Dendritic cell treated with granulocyte-macrophage colony-stimulating factor and Interleukin-4, amounts not matched to agents 40 ng/mL and 50 ng/mL, for 4 days (primary cell): ENCODE measurements at regions of chr9 and their contacts with region 1.

Region 1: DNA sequence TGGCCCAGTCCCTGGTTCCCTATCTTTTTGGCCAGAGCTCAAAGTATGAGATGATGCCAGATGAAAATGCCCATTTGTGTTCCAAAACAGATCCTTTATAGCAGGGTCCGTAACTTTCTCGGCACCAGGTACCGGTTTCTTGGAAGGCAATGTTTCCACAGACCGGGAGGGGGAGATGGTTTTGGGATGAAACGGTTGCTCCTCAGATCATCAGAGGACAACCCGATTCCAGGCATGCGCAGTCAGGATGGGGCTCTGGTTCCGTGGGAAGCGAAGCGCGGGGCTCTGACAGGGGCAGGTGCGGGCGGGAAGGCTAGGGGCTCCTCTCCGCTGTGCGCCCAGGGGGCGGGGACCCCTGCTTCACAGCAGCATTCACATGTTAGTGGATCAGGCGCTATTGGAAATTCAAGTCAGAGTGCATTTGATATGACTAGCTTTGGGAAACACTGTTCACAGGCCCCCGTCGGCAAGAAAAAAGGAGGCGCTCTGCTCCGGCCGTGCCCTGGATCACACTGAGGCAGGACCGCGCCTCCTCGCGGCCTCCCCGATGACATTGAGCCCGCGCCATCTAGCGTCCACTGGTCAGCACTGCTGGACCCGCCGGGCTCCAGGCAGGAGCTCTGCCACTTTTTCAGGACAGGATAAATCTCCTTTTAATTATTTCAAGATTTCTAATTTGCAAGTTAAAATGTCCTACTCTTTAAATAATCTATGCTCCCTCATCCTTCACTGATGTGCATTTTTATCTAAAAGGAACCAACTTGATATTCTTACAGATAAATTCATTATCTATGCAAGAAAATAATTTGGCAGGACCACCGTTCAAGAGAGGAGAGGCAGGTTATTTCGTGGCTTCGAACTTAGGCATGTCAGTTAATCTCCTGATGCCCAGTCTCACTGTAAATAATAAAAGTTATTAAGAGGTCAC is 190.0 kb downstream of the FANCC start:
- H3K4me3 Mint-ChIP-seq: peak overlapping the region; percentile 33
- H3K27ac Mint-ChIP-seq: no peak overlapping the region
- H3K4me1 Mint-ChIP-seq: peaks cover 10% of the 10 kb centered on the region
- H3K27me3 Mint-ChIP-seq: peaks cover 3% of the 10 kb centered on the region

Region 2: DNA sequence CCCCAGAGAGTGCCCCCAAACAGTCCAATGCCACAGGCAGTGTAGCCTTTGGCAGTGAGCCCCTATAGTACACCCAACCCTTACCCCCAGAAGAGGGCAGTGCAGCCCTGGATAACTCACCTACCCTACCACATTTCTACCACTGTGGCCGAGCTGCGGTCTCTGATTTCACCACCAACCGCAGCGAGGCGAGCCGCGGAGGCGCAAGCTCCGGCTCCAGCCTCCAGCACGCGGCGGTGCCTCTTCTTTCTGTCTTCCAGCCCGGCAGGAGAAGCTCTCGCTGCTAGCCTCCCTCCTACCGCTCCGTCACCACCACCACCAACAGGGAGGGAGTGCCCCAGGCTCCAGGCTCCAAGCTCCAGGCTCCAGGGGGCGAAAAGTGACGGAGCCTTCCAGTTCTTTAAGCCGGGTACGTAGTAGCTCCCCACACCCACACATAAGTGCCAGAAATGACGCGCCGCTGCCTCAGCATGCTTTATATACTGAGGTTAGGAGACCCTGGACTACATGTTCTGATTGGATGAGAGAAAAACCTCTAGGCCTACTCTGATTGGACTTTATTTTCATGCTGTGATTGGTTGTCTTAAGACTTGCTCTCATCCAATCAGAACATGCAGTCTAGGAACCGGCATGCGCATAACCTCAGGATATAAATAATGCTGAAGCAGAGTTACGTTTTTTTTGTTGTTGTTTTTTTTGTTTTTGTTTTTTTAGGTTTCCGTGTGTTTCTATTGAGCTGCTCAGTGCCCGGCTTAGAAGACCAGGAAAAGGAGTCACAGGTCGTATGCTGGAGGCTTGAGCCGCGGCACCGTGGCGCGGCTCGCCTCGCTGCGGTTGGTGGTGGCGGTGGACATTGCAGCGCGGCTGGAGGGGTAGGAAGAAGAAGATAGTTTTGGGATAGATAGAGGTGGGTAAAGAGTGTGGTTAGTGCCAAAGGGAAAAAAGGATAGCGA is 572.8 kb before region 1 on chr9 and contains the start of gene PCAT7:
- intact Hi-C with region 1: loop called (anchors 5 kb)
- H3K4me3 Mint-ChIP-seq: no peak within 1 kb of the TSS
- H3K27ac Mint-ChIP-seq: no peak within 1 kb of the TSS
- H3K4me1 Mint-ChIP-seq: peaks cover 5% of the 10 kb centered on the region
- H3K27me3 Mint-ChIP-seq: peaks cover 14% of the 10 kb centered on the region

Region 3: DNA sequence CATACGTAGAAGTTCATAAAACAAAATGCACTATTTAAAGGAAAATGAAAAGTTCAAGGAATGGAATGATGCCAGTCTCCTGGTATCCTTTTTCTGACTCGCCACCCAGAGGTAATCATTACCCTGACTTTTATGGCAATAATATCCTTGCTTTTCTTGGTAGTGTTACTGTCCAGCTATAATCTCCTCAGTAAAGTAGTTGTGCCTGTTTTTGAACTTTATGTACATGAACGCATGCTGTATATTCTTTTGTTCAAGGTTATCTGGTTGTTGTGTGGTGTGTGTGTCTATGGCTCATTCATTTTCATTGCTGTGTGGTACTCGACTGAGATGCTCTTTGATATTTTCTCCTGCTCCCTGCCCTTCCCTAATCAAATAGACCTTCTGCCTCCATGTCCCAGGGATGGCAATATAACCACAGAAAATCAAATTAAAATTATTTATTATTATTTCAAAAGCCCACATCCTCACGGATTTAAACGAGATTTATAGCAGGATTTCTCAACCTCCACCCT is 459.0 kb before region 1 on chr9:
- intact Hi-C with region 1: loop called (anchors 5 kb)
- H3K4me3 Mint-ChIP-seq: no peak overlapping the region
- H3K27ac Mint-ChIP-seq: peak overlapping the region; percentile 73
- H3K4me1 Mint-ChIP-seq: peaks cover 27% of the 10 kb centered on the region
- H3K27me3 Mint-ChIP-seq: peaks cover 1% of the 10 kb centered on the region

Region 4: DNA sequence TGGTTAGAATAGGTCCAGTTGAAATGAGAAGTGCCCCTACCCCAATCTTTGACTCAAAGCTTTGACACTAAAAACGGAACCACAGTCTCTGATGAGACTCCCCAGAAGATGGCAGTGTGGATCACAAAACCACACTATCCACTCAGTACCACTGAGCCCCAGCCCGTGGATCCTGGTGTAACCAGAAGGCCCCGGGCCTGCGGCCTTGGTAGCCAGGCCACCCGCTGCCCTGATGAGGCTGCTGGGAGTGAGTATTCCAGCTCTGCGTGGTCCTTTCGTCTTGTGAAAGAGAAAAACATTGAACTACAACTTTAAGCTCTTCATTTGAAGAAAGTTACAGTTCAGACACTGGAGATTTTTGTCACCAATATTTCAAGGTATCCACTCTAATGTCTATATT is 446.0 kb before region 1 on chr9:
- intact Hi-C with region 1: loop called (anchors 1 kb)
- H3K4me3 Mint-ChIP-seq: no peak overlapping the region
- H3K27ac Mint-ChIP-seq: no peak overlapping the region
- H3K4me1 Mint-ChIP-seq: peaks cover 8% of the 10 kb centered on the region
- H3K27me3 Mint-ChIP-seq: peaks cover 23% of the 10 kb centered on the region

Region 5: DNA sequence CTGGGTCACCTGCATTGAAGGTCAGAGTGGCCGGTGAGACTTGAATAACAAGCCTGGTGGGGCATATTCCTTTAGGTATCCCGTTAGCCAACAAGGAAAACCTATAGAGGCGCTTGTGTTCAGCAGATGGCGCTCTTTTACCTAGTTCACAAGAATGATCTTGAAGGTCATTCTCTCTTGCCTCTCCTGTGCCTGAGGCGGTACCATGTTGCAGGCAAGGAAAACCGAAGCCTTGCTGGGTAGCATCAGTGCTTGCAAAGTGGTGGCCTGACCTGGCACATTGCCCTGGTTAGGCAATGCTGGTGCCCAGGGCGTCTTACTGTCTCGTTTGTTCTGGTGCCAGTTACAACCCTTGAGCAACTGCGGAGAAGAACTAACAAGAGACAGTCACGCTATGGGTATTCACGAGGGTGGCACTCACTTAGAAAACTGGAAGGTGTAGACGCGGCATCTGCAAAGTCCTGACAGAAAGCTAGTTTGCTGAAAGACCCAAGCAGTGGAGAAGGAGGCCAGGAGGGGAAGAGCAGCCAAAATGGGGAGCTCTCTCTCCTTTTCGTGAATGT is 344.3 kb before region 1 on chr9:
- intact Hi-C with region 1: loop called (anchors 1 kb)
- H3K4me3 Mint-ChIP-seq: no peak overlapping the region
- H3K27ac Mint-ChIP-seq: no peak overlapping the region
- H3K4me1 Mint-ChIP-seq: no peaks in the 10 kb centered on the region
- H3K27me3 Mint-ChIP-seq: no peaks in the 10 kb centered on the region